Activated T-helper 1 cell treated with anti-CD3 and anti-CD28 coated beads, Interleukin-12 subunit alpha, Interleukin-12 subunit beta, Interleukin-2, Interleukin-4 antibody, amounts not matched to agents 30 ng/mL and 10 ng/mL and 1 ng/mL, durations not matched to agents 14 hours and 24 hours and 36 hours (primary cell): ENCODE measurements at regions of chr14 and their contacts with region 1.

Region 1: GRCh38 chr14:22570132-22570949 is 18.7 kb downstream of the DAD1 start:
- DNase-seq: peak; percentile 86
- H3K4me3 Mint-ChIP-seq: peak overlapping the region; percentile 85
- H3K27ac Mint-ChIP-seq: peak overlapping the region; percentile 90
- H3K4me1 Mint-ChIP-seq: peaks cover 71% of the 10 kb centered on the region
- H3K27me3 Mint-ChIP-seq: no peaks in the 10 kb centered on the region

Region 2: DNA sequence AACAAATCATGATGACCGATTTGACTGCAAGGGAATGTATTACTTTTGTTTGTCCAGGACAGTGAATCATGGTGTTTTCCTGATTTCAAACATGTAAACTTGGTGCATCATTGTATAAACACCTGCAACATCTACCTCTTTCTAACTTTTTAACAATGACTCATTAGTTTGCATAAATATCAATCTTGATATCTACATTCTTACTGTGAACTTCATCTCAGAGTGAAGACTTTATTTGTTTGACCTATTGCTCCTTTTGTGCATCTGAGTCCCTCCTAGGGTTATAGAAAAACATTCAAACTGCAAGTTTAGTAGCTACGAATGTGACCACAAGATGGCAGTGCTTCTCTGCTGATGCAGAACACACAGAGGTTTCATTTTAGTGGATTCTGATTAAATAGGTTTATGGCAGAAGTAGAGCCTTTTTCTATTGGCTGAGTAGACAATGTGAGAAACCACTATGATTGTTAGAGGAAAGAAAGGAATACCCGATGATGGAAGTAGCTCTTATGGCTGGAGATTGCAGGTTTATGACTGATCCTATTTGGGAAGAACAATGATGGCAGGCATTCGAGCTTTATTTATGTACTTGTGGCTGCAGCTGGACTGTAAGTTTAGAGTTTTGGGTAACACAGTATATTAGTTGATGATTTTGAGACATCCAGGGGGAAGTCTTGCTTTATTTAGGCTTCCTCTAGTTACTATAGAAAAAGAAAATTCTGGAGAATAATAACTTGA is 652.5 kb before region 1 on chr14:
- intact Hi-C with region 1: loop called (anchors 1 kb)
- DNase-seq: peak; percentile 48
- H3K4me3 Mint-ChIP-seq: peak overlapping the region; percentile 75
- H3K27ac Mint-ChIP-seq: peak overlapping the region; percentile 49
- H3K4me1 Mint-ChIP-seq: peaks cover 62% of the 10 kb centered on the region
- H3K27me3 Mint-ChIP-seq: no peaks in the 10 kb centered on the region

Region 3: DNA sequence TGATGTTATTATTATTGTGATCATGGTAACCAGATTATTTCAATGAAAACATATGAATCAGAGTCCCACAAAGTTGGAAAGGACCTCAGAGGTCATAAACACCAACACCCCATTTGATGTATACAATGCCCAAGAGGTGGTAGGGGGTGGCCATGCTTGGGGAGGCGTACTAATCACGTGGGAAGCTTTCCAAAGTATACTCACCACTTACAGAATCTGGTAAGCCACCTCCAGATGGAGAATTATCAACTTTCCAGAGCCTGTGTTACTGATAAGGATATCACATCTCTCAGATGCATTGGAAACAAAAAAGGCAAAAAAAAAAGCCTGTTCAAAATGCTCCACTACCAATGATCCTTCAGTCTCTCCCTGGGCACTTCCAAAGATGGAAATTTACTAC is 10.3 kb after region 1 on chr14:
- intact Hi-C with region 1: no loop called
- DNase-seq: no peak
- H3K4me3 Mint-ChIP-seq: no peak overlapping the region
- H3K27ac Mint-ChIP-seq: peak overlapping the region; percentile 7
- H3K4me1 Mint-ChIP-seq: peaks cover 68% of the 10 kb centered on the region
- H3K27me3 Mint-ChIP-seq: no peaks in the 10 kb centered on the region

Region 4: GRCh38 chr14:22653012-22653621 is 82.8 kb after region 1 on chr14:
- intact Hi-C with region 1: loop called (anchors 1 kb)
- DNase-seq: peak; percentile 25
- H3K4me3 Mint-ChIP-seq: no peak overlapping the region
- H3K27ac Mint-ChIP-seq: no peak overlapping the region
- H3K4me1 Mint-ChIP-seq: no peaks in the 10 kb centered on the region
- H3K27me3 Mint-ChIP-seq: no peaks in the 10 kb centered on the region

Region 5: GRCh38 chr14:22822571-22823098 is 252.3 kb after region 1 on chr14:
- intact Hi-C with region 1: loop called (anchors 2 kb)
- DNase-seq: peak; percentile 52
- H3K4me3 Mint-ChIP-seq: peak overlapping the region; percentile 60
- H3K27ac Mint-ChIP-seq: no peak overlapping the region
- H3K4me1 Mint-ChIP-seq: peaks cover 35% of the 10 kb centered on the region
- H3K27me3 Mint-ChIP-seq: peaks cover 8% of the 10 kb centered on the region

Region 6: DNA sequence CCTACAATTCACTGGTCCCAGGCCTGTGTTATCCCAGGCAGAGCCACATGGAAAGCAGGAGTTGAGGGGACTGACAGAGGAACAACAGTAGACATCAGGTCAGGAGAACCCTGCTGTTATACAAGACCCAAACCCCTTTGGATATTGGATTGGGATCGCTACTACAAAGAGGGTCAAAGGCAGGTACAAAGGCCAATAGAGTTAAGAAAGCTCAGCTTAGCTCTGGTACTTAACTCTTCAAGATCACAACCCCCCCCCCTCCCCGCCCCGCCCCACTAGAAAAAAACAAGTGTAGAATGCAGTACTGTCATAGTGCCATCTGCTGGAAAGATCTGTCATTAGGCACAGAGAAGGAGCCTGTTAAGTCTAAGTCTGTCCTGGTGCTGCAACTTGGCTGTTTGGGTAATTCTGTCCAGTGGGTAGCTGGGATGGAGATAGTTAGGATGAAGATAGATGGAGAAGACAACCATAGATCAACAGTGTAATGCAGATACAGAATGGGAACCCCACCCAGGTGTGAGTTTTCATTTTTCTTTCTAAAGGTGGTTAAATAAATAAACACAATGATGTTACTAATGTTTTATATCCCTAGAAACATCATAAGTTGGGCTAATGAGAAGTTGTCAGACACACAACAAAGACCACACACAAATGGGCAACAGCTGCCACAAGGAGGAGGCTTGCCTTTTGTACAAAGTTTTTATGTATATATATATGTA is 329.9 kb after region 1 on chr14:
- intact Hi-C with region 1: loop called (anchors 1 kb)
- DNase-seq: peak; percentile 30
- H3K4me3 Mint-ChIP-seq: no peak overlapping the region
- H3K27ac Mint-ChIP-seq: peak overlapping the region; percentile 57
- H3K4me1 Mint-ChIP-seq: peaks cover 19% of the 10 kb centered on the region
- H3K27me3 Mint-ChIP-seq: no peaks in the 10 kb centered on the region

Region 7: GRCh38 chr14:23057757-23058653 is 487.7 kb after region 1 on chr14:
- intact Hi-C with region 1: loop called (anchors 5 kb)
- DNase-seq: peak; percentile 75
- H3K4me3 Mint-ChIP-seq: peak overlapping the region; percentile 86
- H3K27ac Mint-ChIP-seq: no peak overlapping the region
- H3K4me1 Mint-ChIP-seq: peaks cover 21% of the 10 kb centered on the region
- H3K27me3 Mint-ChIP-seq: peaks cover 8% of the 10 kb centered on the region